Ascending aorta (tissue), 2 donors: ENCODE measurements at regions of chr5 and their contacts with region 1.

Region 1: GRCh38 chr5:7391814-7392692 is 3.9 kb upstream of the ADCY2 start:
- DNase-seq: no peak
- H3K4me3 ChIP-seq: no peak overlapping the region
- H3K27ac ChIP-seq: no peak overlapping the region
- H3K4me1 ChIP-seq: peaks cover 3% of the 10 kb centered on the region in 2 donors
- H3K27me3 ChIP-seq: no peaks in the 10 kb centered on the region
- CTCF ChIP-seq: peak; percentile 13 to 65 (median 54)

Region 2: DNA sequence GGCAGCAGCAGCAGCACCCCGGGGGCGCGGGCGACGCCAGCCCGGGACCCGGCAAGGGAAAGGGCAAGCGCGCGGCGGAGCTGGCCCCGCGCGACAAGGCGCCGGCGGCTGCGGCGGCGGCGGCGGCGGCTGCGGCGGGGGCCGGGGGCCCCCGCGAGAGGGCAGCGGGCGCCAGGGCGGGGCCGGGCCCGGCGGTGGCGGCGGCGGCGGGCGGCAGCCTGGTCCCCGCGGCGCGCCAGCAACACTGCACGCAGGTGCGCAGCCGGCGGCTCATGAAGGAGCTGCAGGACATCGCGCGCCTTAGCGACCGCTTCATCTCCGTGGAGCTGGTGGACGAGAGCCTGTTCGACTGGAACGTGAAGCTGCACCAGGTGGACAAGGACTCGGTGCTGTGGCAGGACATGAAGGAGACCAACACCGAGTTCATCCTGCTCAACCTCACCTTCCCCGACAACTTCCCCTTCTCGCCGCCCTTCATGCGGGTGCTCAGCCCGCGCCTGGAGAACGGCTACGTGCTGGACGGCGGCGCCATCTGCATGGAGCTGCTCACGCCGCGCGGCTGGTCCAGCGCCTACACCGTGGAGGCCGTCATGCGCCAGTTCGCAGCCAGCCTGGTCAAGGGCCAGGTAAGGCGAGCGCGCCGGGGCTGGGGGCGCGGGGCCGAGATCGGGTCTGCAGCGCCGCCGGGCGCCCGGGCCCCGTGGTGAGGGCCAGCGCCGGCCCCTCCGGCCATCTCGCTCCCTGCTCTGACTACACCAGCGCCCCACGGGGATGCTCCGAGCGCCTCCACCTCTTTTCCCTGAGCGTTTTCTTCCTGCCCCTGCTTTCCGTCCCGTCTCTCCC is 943.2 kb before region 1 on chr5 and contains the start of gene UBE2QL1:
- intact Hi-C with region 1: loop called (anchors 10 kb)
- DNase-seq: no peak
- H3K4me3 ChIP-seq: peak within 1 kb of the TSS; percentile 67 to 72
- H3K27ac ChIP-seq: peak within 1 kb of the TSS in 1 of 2 donors; percentile 40
- H3K4me1 ChIP-seq: peaks cover 0 to 14% of the 10 kb centered on the region in 2 donors
- H3K27me3 ChIP-seq: no peaks in the 10 kb centered on the region
- CTCF ChIP-seq: no peak
- total RNA-seq, gene UBE2QL1: 0.85 TPM

Region 3: GRCh38 chr5:6765612-6766525 is 626.2 kb before region 1 on chr5:
- intact Hi-C with region 1: loop called (anchors 2 kb)
- DNase-seq: peak in 1 of 2 donors; percentile 86
- H3K4me3 ChIP-seq: peak overlapping the region in 1 of 2 donors; percentile 41
- H3K27ac ChIP-seq: peak overlapping the region; percentile 84 to 87
- H3K4me1 ChIP-seq: peaks cover 4 to 13% of the 10 kb centered on the region in 2 donors
- H3K27me3 ChIP-seq: no peaks in the 10 kb centered on the region
- CTCF ChIP-seq: peak; percentile 76 to 92 (median 80)

Region 4: DNA sequence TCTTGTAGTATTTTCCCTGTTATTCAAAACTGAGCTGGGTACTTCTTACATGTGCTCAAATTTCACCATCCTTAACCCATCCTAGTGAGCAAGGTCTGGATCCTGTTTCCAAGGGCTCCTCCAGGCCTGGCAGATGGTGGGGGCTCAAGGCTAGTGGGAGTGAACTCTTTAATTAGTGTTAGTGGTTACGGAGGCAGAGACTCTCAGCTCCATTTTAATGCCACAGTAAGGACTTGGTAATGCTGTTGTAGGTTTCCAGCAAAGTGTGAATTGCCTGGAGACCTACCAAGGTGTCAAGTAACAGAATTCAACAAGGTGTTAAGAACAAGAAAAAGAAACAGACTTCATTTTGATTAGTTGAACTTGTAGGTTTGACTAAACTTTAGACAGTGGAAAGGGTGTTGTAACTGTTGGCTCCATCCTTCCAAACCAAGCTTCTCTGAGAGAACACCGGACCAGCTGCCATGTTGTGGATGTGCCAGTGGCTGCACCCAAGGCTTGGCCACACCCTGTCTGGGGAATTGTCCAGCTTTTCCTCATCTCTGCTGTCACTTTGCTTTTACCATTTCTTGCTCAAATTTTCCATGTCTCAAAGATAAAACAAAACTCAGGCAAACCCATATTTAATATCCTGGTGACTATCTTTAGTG is 102.6 kb after region 1 on chr5:
- intact Hi-C with region 1: loop called (anchors 5 kb)
- DNase-seq: no peak
- H3K4me3 ChIP-seq: no peak overlapping the region
- H3K27ac ChIP-seq: peak overlapping the region; percentile 12 to 28
- H3K4me1 ChIP-seq: peaks cover 0 to 12% of the 10 kb centered on the region in 2 donors
- H3K27me3 ChIP-seq: no peaks in the 10 kb centered on the region
- CTCF ChIP-seq: no peak

Region 5: DNA sequence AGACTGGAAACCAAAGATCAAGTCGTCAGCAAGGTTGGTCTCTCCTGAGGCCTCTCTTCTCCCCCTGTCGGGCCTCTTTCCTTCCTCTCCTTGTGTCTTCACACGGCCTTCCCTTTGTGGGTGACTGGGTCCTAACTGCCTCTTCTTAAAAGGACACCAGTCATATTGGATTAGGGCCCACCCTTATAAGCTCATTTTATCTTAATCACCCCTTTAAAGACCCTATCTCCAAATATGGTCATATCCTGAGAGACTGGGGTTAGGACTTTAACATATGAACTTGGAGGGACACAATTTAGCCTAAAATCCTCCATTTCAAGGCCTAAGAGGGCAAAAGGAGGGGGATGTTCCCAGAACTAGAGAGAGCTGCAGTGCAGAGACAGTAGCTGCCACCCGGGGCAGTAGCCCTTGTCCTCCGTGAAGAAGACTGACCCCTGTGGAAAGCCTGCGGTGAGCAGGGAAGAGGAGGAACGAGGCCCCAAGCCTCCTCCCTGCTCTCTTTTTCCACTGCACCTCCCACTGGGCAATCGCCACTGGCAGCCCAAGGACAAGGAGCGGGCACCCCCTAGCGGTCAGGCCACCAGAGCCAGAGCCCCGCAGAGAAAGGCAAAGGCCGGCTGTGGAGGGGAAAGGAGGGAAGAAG is 424.0 kb after region 1 on chr5:
- intact Hi-C with region 1: loop called (anchors 5 kb)
- DNase-seq: peak; percentile 22 to 90
- H3K4me3 ChIP-seq: peak overlapping the region in 1 of 2 donors; percentile 34
- H3K27ac ChIP-seq: no peak overlapping the region
- H3K4me1 ChIP-seq: no peaks in the 10 kb centered on the region
- H3K27me3 ChIP-seq: no peaks in the 10 kb centered on the region
- CTCF ChIP-seq: peak; percentile 69 to 90 (median 80)